PC-9 (cell line): ENCODE measurements at regions of chr14 and their contacts with region 1.

Region 1: DNA sequence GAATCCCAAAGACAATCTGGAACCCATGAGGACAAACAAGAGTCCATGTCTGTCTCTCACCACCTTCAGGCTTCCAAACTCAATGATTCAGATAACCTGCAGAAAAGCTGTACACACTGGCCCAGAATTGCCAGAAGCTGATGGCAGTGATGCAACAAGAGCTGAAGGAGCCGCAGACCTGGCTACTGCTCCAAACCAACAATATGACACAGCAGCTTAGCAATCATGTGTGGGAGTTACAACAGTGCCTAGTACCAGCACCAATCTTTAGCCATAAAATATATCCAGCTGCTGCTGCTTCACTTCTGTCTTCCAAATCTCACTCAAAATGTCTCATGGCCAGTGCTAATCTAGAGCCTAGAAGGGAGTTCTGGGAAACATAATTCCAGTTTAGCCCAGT is 22.0 kb downstream of the RPS6KA5 start:
- DNase-seq: no peak
- H3K4me3 ChIP-seq: no peak overlapping the region
- H3K27ac ChIP-seq: no peak overlapping the region
- H3K4me1 ChIP-seq: no peaks in the 10 kb centered on the region
- H3K27me3 ChIP-seq: no peaks in the 10 kb centered on the region
- CTCF ChIP-seq: no peak

Region 2: DNA sequence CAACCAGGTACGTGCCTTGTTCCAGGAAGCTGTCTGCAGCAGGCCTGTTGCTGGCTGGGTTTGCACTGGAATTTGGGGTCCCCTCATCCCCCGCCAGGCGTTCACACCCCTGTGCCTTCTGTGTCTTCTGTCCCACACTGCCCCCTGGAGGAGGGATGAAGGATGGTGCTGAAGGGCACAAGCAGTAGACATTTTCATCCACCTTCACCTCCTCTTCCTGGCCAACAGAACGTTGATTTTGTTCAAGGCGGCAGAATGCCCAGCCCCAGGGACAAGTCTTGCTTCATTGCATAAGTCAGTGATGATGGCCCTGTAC is 519.5 kb before region 1 on chr14:
- CTCF ChIA-PET with region 1: no interaction called
- POLR2A ChIA-PET with region 1: no interaction called
- intact Hi-C with region 1: no loop called
- DNase-seq: no peak
- H3K4me3 ChIP-seq: no peak overlapping the region
- H3K27ac ChIP-seq: no peak overlapping the region
- H3K4me1 ChIP-seq: peaks cover 10% of the 10 kb centered on the region
- H3K27me3 ChIP-seq: no peaks in the 10 kb centered on the region
- CTCF ChIP-seq: peak; percentile 74

Region 3: GRCh38 chr14:91082282-91082681 is 43.8 kb after region 1 on chr14:
- CTCF ChIA-PET with region 1: no interaction called
- POLR2A ChIA-PET with region 1: interaction called, 13 read pairs
- intact Hi-C with region 1: no loop called
- DNase-seq: no peak
- H3K4me3 ChIP-seq: no peak overlapping the region
- H3K27ac ChIP-seq: no peak overlapping the region
- H3K4me1 ChIP-seq: no peaks in the 10 kb centered on the region
- H3K27me3 ChIP-seq: no peaks in the 10 kb centered on the region
- CTCF ChIP-seq: no peak